K562 (cell line): ENCODE measurements at regions of chr11 and their contacts with region 1.

Region 1: GRCh38 chr11:82900277-82901164 is at the start of gene PRCP:
- DNase-seq: peak; percentile 87 to 94 (median 90)
- ATAC-seq: peak; percentile 92
- H3K4me3 ChIP-seq: peak within 1 kb of the TSS; percentile 69
- H3K27ac ChIP-seq: peak within 1 kb of the TSS; percentile 77
- H3K4me1 ChIP-seq: peaks cover 8 to 24% of the 10 kb centered on the region in 2 experiments
- H3K27me3 ChIP-seq: no peaks in the 10 kb centered on the region
- CTCF ChIP-seq: 0 out of 6 replicates have a peak, but pooled peaks of 1 of the 3 experiments have one; percentile 5
- EP300 ChIP-seq: peak; percentile 21; the same call in 1 of the 2 replicates
- POLR2A ChIP-seq: peak; percentile 86
- RAD21 ChIP-seq: no peak
- polyA plus RNA-seq, gene PRCP: 28.5 to 34.9 TPM

Region 2: DNA sequence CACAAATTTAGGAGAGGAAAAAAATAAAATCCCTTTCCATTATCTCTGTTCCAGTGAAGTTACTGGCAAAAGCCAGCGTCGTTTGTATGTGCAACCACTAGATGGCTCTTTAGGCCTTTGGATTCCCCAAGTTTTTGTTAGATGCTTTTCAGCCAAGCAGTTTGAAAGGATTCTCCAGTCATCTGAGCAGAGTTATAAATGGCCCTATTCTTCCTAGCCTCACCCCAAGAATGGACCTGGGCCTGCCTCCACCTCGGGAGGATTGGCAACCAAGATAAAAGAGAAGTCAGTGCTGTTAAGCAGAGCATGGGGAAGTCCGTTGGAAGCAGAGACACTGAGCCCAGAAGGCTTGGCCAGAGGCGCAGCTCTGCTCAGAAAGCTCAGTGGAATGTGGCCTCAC is 182.2 kb before region 1 on chr11:
- CTCF ChIA-PET with region 1: interaction called, 3 read pairs
- POLR2A ChIA-PET with region 1: no interaction called
- in situ Hi-C with region 1: no loop called
- intact Hi-C with region 1: loop called (anchors 5 kb)
- DNase-seq: peak; percentile 37 to 59 (median 48)
- ATAC-seq: peak; percentile 86
- H3K4me3 ChIP-seq: no peak overlapping the region
- H3K27ac ChIP-seq: no peak overlapping the region
- H3K4me1 ChIP-seq: no peaks in the 10 kb centered on the region
- H3K27me3 ChIP-seq: peaks cover 5 to 14% of the 10 kb centered on the region in 2 experiments
- CTCF ChIP-seq: peak; percentile 73 to 91 (median 79)
- EP300 ChIP-seq: no peak
- POLR2A ChIP-seq: no peak
- RAD21 ChIP-seq: peak; percentile 90

Region 3: DNA sequence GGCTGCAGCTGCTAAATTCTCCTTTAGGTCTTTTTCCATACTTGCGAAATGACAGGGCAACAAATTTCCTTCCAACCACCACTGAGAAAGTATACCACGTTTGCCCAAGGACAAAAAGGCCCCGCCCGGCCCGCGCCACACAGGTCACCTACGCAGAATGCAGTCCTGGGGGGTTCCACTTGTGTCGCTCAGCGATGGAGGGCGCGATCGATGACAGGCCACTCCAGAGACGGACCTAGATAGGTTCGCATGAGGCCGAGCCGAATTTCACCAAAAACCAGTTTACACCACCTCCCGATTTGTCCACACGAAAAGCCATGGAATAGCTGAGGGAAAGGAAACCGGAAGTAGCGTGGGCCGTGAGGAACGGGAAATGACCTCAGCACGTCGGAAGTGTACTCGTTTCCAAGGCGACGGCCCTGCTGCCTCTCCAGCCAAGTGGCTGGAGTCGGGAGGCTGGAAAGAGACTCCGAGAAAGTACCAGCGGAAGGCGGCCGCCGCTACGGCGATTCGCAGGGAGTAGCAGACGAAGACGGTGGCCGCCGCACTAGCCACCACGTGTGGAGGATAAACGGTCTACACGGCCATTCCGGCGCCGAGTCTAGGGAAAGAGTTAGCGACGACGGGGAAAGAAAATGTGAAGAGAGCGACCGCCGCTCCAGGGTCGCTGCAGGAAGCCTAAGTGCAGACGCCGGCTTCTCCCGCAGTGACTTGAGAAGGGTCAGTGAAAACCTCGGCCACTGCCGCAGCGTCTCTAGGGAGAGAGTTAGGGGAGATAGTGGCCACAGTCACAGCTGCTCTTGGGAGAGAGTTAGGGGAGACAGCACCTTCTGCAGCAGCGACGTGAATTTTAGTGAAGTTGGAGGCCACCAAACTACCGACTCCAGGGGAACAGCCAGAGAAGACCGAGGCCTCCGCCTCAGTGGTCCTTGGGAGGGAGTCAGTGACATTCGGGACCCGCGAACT is 293.1 kb after region 1 on chr11 and contains the start of gene ANKRD42:
- CTCF ChIA-PET with region 1: no interaction called
- POLR2A ChIA-PET with region 1: no interaction called
- in situ Hi-C with region 1: no loop called
- intact Hi-C with region 1: loop called (anchors 10 kb)
- DNase-seq: peak; percentile 85 to 97 (median 88)
- ATAC-seq: peak; percentile 86
- H3K4me3 ChIP-seq: peak within 1 kb of the TSS; percentile 82
- H3K27ac ChIP-seq: peak within 1 kb of the TSS; percentile 92
- H3K4me1 ChIP-seq: peaks cover 8 to 10% of the 10 kb centered on the region in 2 experiments; a peak in 3 of 5 replicates
- H3K27me3 ChIP-seq: no peaks in the 10 kb centered on the region
- CTCF ChIP-seq: no peak
- EP300 ChIP-seq: no peak
- POLR2A ChIP-seq: peak; percentile 89
- RAD21 ChIP-seq: no peak
- polyA plus RNA-seq, gene ANKRD42: 2.8 to 5.5 TPM

Region 4: DNA sequence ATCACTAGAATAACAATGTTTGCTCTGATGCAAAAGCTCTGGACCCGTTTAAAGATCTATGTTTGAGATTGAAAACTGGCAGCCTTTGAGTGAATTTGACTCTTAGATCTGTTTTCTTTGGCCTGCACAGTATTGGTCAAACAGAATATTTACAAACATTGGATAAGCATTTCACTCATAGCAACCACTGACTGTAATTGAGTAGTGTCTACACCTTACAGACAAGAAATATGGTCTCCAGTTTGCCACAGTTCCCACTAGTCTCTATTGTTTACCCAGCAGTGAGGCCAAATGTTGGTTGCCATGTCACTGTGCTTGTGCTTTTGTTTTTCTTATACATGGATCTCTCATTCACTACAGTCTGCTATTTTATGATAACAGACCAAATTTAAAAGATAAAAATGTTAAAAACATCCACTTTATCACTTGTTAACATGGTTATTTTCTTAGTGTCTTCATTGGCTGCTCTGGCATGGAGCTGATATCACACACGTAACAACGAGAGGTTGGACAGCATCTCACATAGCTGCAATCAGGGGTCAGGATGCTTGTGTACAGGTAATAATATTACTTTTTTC is 305.2 kb after region 1 on chr11:
- CTCF ChIA-PET with region 1: no interaction called
- POLR2A ChIA-PET with region 1: no interaction called
- in situ Hi-C with region 1: no loop called
- intact Hi-C with region 1: no loop called
- DNase-seq: no peak
- ATAC-seq: no peak
- H3K4me3 ChIP-seq: no peak overlapping the region
- H3K27ac ChIP-seq: no peak overlapping the region
- H3K4me1 ChIP-seq: no peaks in the 10 kb centered on the region; a peak in 1 of 5 replicates
- H3K27me3 ChIP-seq: no peaks in the 10 kb centered on the region
- CTCF ChIP-seq: no peak
- EP300 ChIP-seq: no peak
- POLR2A ChIP-seq: no peak
- RAD21 ChIP-seq: no peak

Region 5: DNA sequence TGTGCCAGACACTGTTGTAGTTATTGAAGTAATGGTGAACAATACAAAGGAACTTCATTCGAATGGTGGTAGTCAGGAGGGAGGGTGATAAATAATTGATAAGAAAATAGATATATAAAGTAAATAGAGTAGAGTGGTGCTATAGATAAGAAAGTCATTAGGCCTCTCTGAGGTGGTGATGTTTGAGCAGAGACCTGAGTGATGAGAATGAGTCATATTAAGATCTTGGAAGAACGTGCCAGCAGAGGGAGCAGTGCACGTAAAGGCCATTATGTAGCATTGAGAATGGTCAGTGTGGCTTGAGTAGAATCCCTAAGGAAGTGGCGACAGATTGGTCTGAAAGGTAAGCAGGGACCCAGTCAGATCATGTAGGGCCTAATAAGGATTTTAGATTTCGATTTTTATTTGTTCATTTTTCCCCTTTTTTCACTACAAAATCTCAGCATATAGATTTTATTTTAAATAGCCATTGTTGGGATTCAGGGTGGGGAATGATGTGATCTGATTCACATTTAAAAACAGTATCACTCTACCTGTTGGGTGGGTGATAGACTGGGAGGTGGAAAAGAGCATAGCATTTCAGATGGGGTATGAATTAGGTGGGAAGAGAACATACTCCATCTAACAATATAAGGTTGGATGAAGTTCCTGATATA is 340.9 kb after region 1 on chr11:
- CTCF ChIA-PET with region 1: no interaction called
- POLR2A ChIA-PET with region 1: no interaction called
- in situ Hi-C with region 1: loop called (anchors 25 kb)
- intact Hi-C with region 1: no loop called
- DNase-seq: peak; percentile 47 to 81 (median 53)
- ATAC-seq: peak; percentile 99
- H3K4me3 ChIP-seq: no peak overlapping the region
- H3K27ac ChIP-seq: no peak overlapping the region
- H3K4me1 ChIP-seq: no peaks in the 10 kb centered on the region
- H3K27me3 ChIP-seq: no peaks in the 10 kb centered on the region
- CTCF ChIP-seq: peak; percentile 66 to 83 (median 70)
- EP300 ChIP-seq: no peak
- POLR2A ChIP-seq: no peak
- RAD21 ChIP-seq: peak; percentile 12 to 60; a peak in 2 of 4 replicates

Region 6: GRCh38 chr11:83285771-83286528 is 385.4 kb after region 1 on chr11 and contains the start of gene CCDC90B:
- CTCF ChIA-PET with region 1: no interaction called
- POLR2A ChIA-PET with region 1: no interaction called
- in situ Hi-C with region 1: no loop called
- intact Hi-C with region 1: loop called (anchors 2 kb)
- DNase-seq: peak; percentile 85 to 98 (median 88)
- ATAC-seq: peak; percentile 95
- H3K4me3 ChIP-seq: peak within 1 kb of the TSS; percentile 76
- H3K27ac ChIP-seq: peak within 1 kb of the TSS; percentile 99
- H3K4me1 ChIP-seq: peaks cover 6 to 11% of the 10 kb centered on the region in 2 experiments; a peak in 4 of 5 replicates
- H3K27me3 ChIP-seq: no peaks in the 10 kb centered on the region
- CTCF ChIP-seq: peak; percentile 22 to 69 (median 64); a peak in 5 of 6 replicates
- EP300 ChIP-seq: no peak
- POLR2A ChIP-seq: peak; percentile 99
- RAD21 ChIP-seq: no peak
- polyA plus RNA-seq, gene CCDC90B: 60.6 to 63.6 TPM